ENCODE measurements at regions of chr5 and their contacts with region 1.

Region 1: GRCh38 chr5:110757118-110757729 is 18.4 kb downstream of the SLC25A46 start:
- DNase-seq: peak; percentile 42
- H3K4me3 ChIP-seq: no peak overlapping the region
- H3K27ac ChIP-seq: no peak overlapping the region
- H3K4me1 ChIP-seq: no peaks in the 10 kb centered on the region
- H3K27me3 ChIP-seq: no peaks in the 10 kb centered on the region
- CTCF ChIP-seq: peak; percentile 52 to 61

Region 2: DNA sequence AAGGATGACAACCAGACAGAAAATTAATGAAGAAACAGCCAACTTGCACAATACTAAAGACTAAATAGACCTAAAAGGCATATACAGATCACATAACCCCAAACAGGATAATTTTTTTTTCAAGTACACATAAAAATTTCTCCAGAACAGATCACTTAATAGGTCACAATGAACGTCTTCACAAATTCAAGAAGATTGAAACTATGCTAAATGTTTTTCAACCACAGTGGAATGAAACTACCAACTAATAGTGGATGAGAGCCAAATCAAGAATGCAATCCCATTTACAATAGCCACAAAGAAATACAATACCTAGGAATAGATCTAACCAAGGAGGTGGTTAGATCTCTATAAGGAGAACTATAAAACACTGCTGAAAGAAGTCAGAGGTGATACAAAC is 176.6 kb before region 1 on chr5:
- CTCF ChIA-PET with region 1: no interaction called
- dilution Hi-C with region 1: no loop called
- in situ Hi-C with region 1: no loop called
- intact Hi-C with region 1: no loop called
- DNase-seq: no peak
- H3K4me3 ChIP-seq: no peak overlapping the region
- H3K27ac ChIP-seq: no peak overlapping the region
- H3K4me1 ChIP-seq: no peaks in the 10 kb centered on the region
- H3K27me3 ChIP-seq: peaks cover 2% of the 10 kb centered on the region
- CTCF ChIP-seq: no peak

Region 3: GRCh38 chr5:110957934-110958333 is 200.7 kb after region 1 on chr5:
- CTCF ChIA-PET with region 1: no interaction called
- dilution Hi-C with region 1: no loop called
- in situ Hi-C with region 1: no loop called
- intact Hi-C with region 1: loop called (anchors 10 kb)
- DNase-seq: peak; percentile 93
- H3K4me3 ChIP-seq: no peak overlapping the region
- H3K27ac ChIP-seq: peak overlapping the region; percentile 37
- H3K4me1 ChIP-seq: peaks cover 11% of the 10 kb centered on the region
- H3K27me3 ChIP-seq: no peaks in the 10 kb centered on the region
- CTCF ChIP-seq: no peak

Region 4: DNA sequence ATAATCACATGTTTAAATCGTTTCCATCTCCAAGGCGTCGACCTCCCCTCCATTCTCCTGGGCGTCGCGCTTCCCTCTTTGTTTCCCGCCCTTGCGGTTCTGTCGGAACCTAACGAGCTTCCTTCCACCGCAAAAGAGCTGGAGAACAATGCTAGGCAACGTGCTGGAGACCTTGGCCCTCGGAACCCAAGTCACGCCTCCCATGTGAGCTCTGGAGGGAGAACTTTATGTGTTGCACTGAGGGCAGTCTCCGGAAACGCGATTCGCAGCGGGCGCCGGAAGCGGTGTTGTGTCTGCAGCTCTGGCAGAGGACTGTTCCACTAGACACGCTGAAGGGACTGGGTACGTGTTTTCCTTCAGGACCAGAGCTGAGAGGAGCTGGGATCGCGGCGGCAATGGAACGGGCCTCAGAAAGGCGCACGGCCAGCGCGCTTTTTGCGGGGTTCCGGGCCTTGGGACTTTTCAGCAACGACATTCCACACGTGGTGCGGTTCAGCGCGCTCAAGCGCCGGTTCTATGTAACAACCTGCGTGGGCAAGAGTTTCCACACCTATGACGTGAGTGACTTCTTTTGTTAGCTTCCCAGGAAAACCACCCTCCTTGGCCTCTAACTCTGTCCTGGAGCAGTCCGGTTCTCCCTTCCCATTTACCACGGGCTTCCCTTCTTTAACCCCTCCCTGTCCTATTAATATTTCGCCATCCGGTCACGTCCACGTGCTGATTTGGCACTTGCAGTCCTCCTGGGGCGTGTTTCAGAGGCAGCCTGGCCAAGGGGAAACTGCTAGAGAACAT is 335.0 kb after region 1 on chr5 and contains the start of gene WDR36:
- CTCF ChIA-PET with region 1: interaction called, 10 read pairs
- dilution Hi-C with region 1: no loop called
- in situ Hi-C with region 1: no loop called
- intact Hi-C with region 1: loop called (anchors 1 kb)
- DNase-seq: peak; percentile 90
- H3K4me3 ChIP-seq: peak within 1 kb of the TSS; percentile 77 to 98 (median 96)
- H3K27ac ChIP-seq: peak within 1 kb of the TSS; percentile 60
- H3K4me1 ChIP-seq: peaks cover 15% of the 10 kb centered on the region
- H3K27me3 ChIP-seq: no peaks in the 10 kb centered on the region
- CTCF ChIP-seq: no peak
- total RNA-seq, gene WDR36: 45.5 to 67.2 TPM

Region 5: GRCh38 chr5:111278845-111279504 is 521.8 kb after region 1 on chr5:
- CTCF ChIA-PET with region 1: no interaction called
- dilution Hi-C with region 1: no loop called
- in situ Hi-C with region 1: no loop called
- intact Hi-C with region 1: loop called (anchors 5 kb)
- DNase-seq: peak; percentile 35
- H3K4me3 ChIP-seq: no peak overlapping the region
- H3K27ac ChIP-seq: no peak overlapping the region
- H3K4me1 ChIP-seq: no peaks in the 10 kb centered on the region
- H3K27me3 ChIP-seq: no peaks in the 10 kb centered on the region
- CTCF ChIP-seq: peak; percentile 82 to 91

Measured in mammary epithelial cell (primary cell).